ENCODE measurements at regions of chr12 and their contacts with region 1.

Region 1: GRCh38 chr12:70733385-70733784 is 96.2 kb upstream of the PTPRB start:
- DNase-seq: peak; percentile 69
- H3K4me3 ChIP-seq: no peak overlapping the region; a peak in 1 of 4 replicates
- H3K27ac ChIP-seq: peak overlapping the region in 1 of 2 experiments; percentile 62; a peak in 2 of 4 replicates
- H3K4me1 ChIP-seq: peaks cover 0 to 3% of the 10 kb centered on the region in 2 experiments; a peak in 2 of 4 replicates
- H3K27me3 ChIP-seq: no peaks in the 10 kb centered on the region
- CTCF ChIP-seq: peak; percentile 75
- EP300 ChIP-seq: no peak
- RAD21 ChIP-seq: peak; percentile 92

Region 2: DNA sequence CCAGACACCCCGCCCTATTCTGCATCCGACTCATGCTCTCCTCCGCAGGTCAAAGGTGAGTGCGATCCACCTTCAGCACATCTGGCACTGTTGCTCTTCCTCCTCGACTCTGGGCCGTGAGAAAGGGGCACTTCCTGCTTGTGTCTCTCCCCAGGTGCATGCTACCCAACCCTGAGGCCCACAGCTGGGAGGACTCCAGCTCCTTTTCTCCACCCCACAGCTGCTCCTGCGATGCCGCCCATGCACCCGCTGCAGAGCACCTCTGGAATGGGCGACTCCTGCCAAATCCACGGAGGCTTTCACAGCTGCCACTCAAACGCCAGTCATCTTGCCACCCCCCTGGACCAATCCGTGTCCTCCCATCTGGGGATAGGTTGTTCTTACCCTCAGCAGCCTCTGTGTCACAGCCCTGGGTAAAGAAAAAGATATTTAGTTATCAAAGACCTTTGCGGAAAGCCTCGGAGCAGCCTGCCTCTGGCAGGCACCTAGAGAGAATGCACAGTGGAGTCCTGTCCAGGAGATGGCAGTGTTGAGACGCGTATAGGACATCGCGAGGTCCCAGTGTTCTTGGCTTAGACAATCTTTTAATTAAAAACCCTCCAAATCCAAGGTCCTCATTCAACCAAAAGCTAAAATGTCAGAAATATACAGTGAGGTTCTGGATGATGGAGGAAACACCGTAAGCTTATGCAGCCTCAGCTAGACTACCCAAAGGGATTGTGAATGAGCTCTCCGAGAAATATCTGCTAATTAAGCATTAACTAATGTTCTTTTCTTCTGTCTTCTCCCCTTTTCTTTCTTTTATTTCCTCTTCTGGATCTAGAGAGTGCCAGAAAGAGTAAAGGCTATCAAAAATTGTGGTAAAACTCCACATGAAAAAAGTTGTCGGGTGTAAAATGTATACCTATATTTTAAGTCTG is 854.1 kb before region 1 on chr12:
- CTCF ChIA-PET with region 1: interaction called, 65 read pairs
- POLR2A ChIA-PET with region 1: no interaction called
- DNase-seq: peak; percentile 76
- H3K4me3 ChIP-seq: peak overlapping the region; percentile 35 to 37; a peak in 2 of 4 replicates
- H3K27ac ChIP-seq: no peak overlapping the region
- H3K4me1 ChIP-seq: peaks cover 0 to 5% of the 10 kb centered on the region in 2 experiments; a peak in 1 of 4 replicates
- H3K27me3 ChIP-seq: no peaks in the 10 kb centered on the region
- CTCF ChIP-seq: peak; percentile 94
- EP300 ChIP-seq: no peak
- RAD21 ChIP-seq: peak; percentile 98

Region 3: DNA sequence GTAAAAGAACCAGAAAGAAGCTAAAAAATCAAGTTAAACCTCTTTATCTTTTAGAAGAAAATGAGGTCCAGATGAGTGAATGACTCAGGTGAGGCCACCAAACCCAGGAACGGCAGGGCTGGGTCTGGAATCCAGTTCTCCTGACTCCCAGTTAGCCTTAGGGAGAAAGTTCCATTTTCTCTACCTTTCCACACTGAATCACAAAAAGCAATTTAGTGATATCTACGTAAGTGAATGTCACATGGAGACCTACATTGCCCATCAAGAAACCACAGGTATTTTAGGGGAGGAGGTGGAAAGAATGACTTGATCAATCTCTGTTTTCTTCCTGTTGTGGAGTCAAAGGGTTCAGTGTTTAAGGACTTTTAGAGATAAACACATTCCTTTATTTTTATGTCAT is 10.7 kb after region 1 on chr12:
- CTCF ChIA-PET with region 1: interaction called, 11 read pairs
- POLR2A ChIA-PET with region 1: no interaction called
- DNase-seq: no peak
- H3K4me3 ChIP-seq: no peak overlapping the region
- H3K27ac ChIP-seq: no peak overlapping the region
- H3K4me1 ChIP-seq: no peaks in the 10 kb centered on the region
- H3K27me3 ChIP-seq: no peaks in the 10 kb centered on the region; the same call in 1 of the 2 replicates
- CTCF ChIP-seq: no peak
- EP300 ChIP-seq: no peak
- RAD21 ChIP-seq: no peak

Region 4: DNA sequence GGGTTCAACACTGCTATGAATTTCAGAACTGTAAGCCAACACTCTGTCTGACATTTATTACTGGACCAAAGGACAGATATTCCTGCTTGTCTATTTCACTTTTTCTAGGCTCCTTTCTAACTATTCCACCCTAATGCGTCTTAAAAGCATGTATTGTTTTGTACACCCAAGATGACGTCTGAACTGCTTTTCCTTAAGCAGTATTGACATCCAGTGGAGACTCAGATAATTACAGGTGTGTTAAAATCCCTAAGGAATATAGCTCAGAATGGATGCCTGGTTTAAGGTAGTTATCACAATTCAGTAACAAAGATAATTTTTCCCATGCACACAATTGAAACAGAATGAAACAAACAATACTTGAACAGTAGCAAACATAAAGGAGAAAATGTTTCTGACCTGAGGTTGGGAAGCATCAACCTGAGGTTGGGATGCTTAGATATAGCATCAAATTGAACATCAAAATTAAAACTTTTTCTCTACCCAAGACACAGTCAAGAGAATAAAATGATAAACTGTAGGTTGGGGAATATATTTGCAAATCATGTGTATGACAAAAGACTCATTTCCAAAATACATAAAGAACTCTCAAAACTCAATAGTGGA is 280.9 kb after region 1 on chr12:
- CTCF ChIA-PET with region 1: interaction called, 26 read pairs
- POLR2A ChIA-PET with region 1: no interaction called
- DNase-seq: peak; percentile 4
- H3K4me3 ChIP-seq: no peak overlapping the region
- H3K27ac ChIP-seq: no peak overlapping the region; a peak in 1 of 4 replicates
- H3K4me1 ChIP-seq: peaks cover 0 to 10% of the 10 kb centered on the region in 2 experiments; a peak in 3 of 4 replicates
- H3K27me3 ChIP-seq: no peaks in the 10 kb centered on the region
- CTCF ChIP-seq: peak; percentile 41
- EP300 ChIP-seq: no peak
- RAD21 ChIP-seq: peak; percentile 92

Region 5: DNA sequence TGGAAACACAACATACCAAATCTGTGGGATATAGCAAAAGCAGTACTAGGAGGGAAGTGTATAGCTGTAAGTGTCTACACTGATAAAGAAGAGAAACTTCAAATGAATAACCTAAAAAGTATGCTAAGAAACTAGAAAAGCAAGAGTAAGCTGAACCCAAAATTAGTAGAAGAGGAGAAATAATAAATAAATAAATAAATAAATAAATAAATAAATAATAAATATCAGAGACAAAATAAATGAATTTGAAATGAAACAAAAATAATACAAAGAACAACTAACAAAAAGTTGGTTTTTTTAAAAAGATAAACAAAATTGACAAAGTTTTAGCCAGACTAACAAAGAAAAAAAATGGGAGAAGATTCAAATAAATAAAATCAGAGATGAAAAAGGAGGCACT is 497.2 kb after region 1 on chr12:
- CTCF ChIA-PET with region 1: no interaction called
- POLR2A ChIA-PET with region 1: no interaction called
- DNase-seq: no peak
- H3K4me3 ChIP-seq: no peak overlapping the region
- H3K27ac ChIP-seq: no peak overlapping the region
- H3K4me1 ChIP-seq: no peaks in the 10 kb centered on the region
- H3K27me3 ChIP-seq: no peaks in the 10 kb centered on the region
- CTCF ChIP-seq: no peak
- EP300 ChIP-seq: no peak
- RAD21 ChIP-seq: no peak

Region 6: DNA sequence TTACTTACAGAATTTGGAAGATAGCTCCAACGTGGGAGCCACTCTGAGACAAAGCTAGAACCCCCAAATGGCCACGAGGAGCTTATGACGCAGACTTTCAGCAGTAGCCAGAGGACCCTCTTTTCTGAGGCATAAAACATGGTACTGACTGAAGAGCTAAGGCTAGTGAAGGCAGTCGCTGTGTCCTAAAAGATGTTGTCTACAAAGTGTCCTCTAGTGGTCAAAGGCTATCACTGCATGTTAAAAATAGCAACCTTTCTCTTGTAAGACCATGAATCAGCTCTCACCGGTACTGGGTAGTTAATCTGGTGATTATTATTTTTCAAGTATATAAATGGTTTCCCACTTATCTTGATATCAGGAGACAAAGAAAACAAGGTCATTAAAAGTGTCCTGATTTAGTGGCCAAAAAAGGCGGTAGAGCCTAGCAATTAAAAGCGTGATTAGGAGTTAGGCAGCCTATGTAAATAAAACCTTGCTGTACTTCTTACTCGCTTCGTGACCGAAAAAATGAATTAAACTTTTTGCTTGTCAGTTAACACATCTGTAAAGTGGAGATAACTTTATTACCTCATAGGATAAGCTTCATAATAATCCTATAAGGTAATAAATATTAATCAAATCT is 659.2 kb after region 1 on chr12:
- CTCF ChIA-PET with region 1: interaction called, 19 read pairs
- POLR2A ChIA-PET with region 1: no interaction called
- DNase-seq: peak; percentile 67
- H3K4me3 ChIP-seq: no peak overlapping the region
- H3K27ac ChIP-seq: no peak overlapping the region
- H3K4me1 ChIP-seq: peaks cover 0 to 5% of the 10 kb centered on the region in 2 experiments; a peak in 2 of 4 replicates
- H3K27me3 ChIP-seq: no peaks in the 10 kb centered on the region
- CTCF ChIP-seq: peak; percentile 82
- EP300 ChIP-seq: no peak
- RAD21 ChIP-seq: peak; percentile 76